ENCODE measurements at regions of chr2 and their contacts with region 1.

Region 1: DNA sequence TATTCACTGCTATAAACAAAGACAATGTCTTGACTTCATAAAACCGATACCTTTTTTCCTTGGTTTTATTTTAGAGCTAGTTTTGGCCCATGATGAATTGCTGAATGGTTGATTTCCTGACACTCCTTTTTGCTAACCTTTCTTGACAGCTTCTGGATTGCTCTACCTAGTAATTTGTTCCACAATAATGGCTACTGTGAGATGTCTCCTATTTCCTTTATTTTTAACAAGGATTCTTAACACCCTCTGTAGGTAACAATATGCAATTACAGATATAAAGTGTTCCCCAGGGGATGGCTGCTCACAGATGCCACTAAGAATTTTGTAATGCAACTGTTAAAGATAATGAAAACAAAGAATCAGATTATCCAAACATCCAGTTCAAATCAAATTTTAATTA is 100.8 kb upstream of the ATP5MC3 start:
- DNase-seq: no peak
- H3K4me3 ChIP-seq: no peak overlapping the region
- H3K27ac ChIP-seq: no peak overlapping the region
- H3K4me1 ChIP-seq: no peaks in the 10 kb centered on the region
- H3K27me3 ChIP-seq: no peaks in the 10 kb centered on the region
- CTCF ChIP-seq: peak; percentile 66

Region 2: DNA sequence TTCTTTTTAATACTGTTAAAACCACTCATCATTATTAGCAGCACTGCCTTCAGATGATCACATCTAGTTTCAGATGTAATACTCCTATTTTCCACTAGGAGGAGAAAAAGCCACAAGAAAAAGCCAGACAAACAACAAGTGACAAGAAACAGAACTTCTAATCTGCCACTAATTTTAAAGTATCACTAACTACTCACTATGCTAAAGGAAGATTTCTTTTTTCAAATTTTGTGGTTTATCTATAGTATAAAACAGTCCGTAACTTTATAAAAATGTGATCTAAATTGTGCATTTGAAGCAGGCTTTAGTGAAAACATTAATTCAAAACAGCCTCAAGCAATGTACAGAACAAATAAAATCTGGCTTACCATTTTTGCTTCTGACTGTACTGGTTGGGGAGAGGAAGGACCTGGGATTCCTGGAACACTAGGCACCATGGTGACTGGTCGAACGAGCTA is 171.1 kb before region 1 on chr2:
- intact Hi-C with region 1: loop called (anchors 10 kb)
- DNase-seq: no peak
- H3K4me3 ChIP-seq: no peak overlapping the region
- H3K27ac ChIP-seq: no peak overlapping the region
- H3K4me1 ChIP-seq: peaks cover 9% of the 10 kb centered on the region
- H3K27me3 ChIP-seq: no peaks in the 10 kb centered on the region
- CTCF ChIP-seq: peak; percentile 83

Region 3: GRCh38 chr2:175251425-175252041 is 30.8 kb before region 1 on chr2:
- intact Hi-C with region 1: no loop called
- DNase-seq: no peak
- H3K4me3 ChIP-seq: no peak overlapping the region
- H3K27ac ChIP-seq: no peak overlapping the region
- H3K4me1 ChIP-seq: no peaks in the 10 kb centered on the region
- H3K27me3 ChIP-seq: peaks cover 21% of the 10 kb centered on the region
- CTCF ChIP-seq: peak; percentile 67

Measured in left ventricle myocardium inferior (tissue), 1 donor.